Gastrocnemius medialis (tissue), 4 donors: ENCODE measurements at regions of chr13 and their contacts with region 1.

Region 1: DNA sequence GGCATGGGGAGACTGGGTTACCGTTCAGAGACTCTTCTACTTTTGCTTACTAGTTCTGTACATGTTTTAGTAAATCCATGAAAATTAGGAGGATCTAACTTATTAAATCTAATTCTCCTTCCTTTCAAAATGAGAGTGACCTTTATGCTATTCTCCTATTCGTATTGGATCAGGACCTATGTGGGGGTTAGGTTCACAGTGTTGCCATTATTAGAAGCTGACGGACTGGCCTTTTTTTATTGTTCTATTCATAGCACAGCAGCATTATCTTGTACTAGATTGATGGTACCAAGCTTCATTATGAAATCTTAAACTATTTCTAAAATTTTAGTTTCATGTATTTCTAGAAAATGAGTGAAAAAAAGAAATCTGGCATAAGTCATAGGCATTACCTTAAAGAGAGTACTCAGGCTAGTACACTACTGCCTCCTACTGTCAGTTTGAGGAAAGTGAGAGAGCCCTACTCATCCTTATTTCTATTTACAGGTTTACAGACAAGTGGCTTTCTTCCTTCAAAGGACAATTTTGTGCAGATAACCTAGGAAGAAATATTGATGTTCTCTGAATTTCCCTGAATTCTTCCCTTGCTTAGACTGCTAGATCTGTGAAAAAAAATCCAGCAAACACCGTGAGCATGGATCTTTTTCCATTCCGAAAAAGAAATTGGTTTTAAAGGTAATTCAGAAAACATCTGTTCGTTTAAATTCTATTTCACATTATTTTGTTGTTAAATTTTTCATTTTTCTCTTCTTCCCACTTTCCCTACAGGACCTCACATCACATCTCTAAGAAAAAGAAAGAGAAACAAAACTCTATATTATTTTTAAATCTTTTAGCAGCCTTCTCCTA is 485.5 kb downstream of the DIAPH3 start:
- DNase-seq: no peak
- ATAC-seq: no peak
- H3K4me3 ChIP-seq: peak overlapping the region in 1 of 4 donors; percentile 12
- H3K27ac ChIP-seq: no peak overlapping the region
- H3K4me1 ChIP-seq: peaks cover 13 to 18% of the 10 kb centered on the region in 2 donors
- H3K27me3 ChIP-seq: no peaks in the 10 kb centered on the region
- CTCF ChIP-seq: peak; percentile 25 to 61 (median 47)
- POLR2A ChIP-seq: no peak

Region 2: DNA sequence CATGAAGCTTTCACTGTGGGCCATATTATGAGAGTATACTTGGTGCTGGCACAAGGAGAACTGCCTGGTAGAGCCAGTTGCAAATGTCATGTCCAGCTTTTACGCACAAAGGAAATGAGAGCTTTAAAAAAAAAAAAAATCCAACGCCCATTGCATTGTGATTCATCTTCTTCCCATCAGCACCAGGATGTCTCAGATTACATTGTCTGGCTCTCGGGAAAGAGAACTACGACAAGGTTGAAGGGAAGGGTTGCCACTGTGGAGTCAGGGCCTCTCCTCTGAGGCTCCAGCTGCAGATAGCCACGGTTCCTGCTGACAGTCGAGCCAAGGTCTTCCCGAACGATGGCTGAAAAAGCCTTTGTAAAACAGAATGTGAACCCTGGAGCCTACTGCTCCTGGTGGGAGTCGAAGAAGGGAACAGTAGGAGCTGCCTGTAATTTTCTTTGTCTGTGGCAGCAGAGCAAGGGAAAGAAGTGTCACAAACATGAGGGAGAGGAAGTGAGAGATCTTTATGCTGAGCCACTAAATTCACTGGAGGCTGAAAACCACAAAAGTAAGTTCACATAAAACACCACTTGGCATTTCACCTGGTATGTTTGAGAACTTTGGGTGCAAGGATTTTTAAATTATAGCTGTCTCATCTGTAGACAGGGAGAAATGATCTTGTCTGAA is 219.1 kb before region 1 on chr13:
- in situ Hi-C with region 1: no loop called
- intact Hi-C with region 1: loop called (anchors 10 kb)
- DNase-seq: no peak
- ATAC-seq: peak; percentile 68 to 76
- H3K4me3 ChIP-seq: no peak overlapping the region
- H3K27ac ChIP-seq: peak overlapping the region in 2 of 4 donors; percentile 33 to 60
- H3K4me1 ChIP-seq: peaks cover 0 to 3% of the 10 kb centered on the region in 2 donors
- H3K27me3 ChIP-seq: no peaks in the 10 kb centered on the region
- CTCF ChIP-seq: no peak
- POLR2A ChIP-seq: no peak

Region 3: GRCh38 chr13:59641817-59642216 is 36.4 kb before region 1 on chr13:
- in situ Hi-C with region 1: no loop called
- intact Hi-C with region 1: loop called (anchors 2 kb)
- DNase-seq: no peak
- ATAC-seq: no peak
- H3K4me3 ChIP-seq: no peak overlapping the region
- H3K27ac ChIP-seq: no peak overlapping the region
- H3K4me1 ChIP-seq: no peaks in the 10 kb centered on the region
- H3K27me3 ChIP-seq: no peaks in the 10 kb centered on the region
- CTCF ChIP-seq: no peak
- POLR2A ChIP-seq: no peak